Uterus (tissue), 4 donors: ENCODE measurements at regions of chr12 and their contacts with region 1.

Region 1: GRCh38 chr12:111812881-111813741 is 28.9 kb upstream of the MAPKAPK5 start:
- DNase-seq: peak; percentile 82 to 89
- H3K4me3 ChIP-seq: no peak overlapping the region
- H3K27ac ChIP-seq: no peak overlapping the region
- H3K4me1 ChIP-seq: no peaks in the 10 kb centered on the region
- H3K27me3 ChIP-seq: no peaks in the 10 kb centered on the region
- CTCF ChIP-seq: peak; percentile 80 to 91 (median 84)
- POLR2A ChIP-seq: no peak

Region 2: GRCh38 chr12:111757361-111758119 is 55.6 kb before region 1 on chr12:
- intact Hi-C with region 1: loop called (anchors 5 kb)
- DNase-seq: no peak
- H3K4me3 ChIP-seq: no peak overlapping the region
- H3K27ac ChIP-seq: no peak overlapping the region
- H3K4me1 ChIP-seq: no peaks in the 10 kb centered on the region
- H3K27me3 ChIP-seq: no peaks in the 10 kb centered on the region
- CTCF ChIP-seq: no peak
- POLR2A ChIP-seq: no peak